Activated naive CD4-positive, alpha-beta T cell treated with anti-CD3 and anti-CD28 coated beads for 36 hours (primary cell): ENCODE measurements at regions of chr17 and their contacts with region 1.

Region 1: DNA sequence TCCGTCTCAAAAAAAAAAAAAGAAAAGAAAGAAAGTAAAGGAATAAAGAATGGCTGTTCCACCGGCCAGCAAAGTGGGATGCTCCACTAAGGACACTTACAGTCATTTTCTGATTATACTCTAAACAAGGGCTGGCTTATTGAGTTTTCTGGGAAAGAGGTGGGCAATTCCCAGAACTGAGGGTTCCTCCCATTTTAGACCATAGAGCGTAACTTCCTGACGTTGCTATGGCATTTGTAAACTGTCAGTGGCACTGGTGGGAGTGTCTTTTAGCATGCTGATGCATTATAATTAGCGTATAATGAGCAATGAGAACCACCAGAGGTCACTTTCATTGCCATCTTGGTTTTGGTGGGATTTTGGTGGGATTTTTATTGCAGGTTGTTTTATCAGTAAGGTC is 58.0 kb downstream of the PIGL start:
- DNase-seq: no peak
- H3K4me3 Mint-ChIP-seq: no peak overlapping the region
- H3K27ac Mint-ChIP-seq: no peak overlapping the region
- H3K4me1 Mint-ChIP-seq: peaks cover 7% of the 10 kb centered on the region
- H3K27me3 Mint-ChIP-seq: no peaks in the 10 kb centered on the region

Region 2: DNA sequence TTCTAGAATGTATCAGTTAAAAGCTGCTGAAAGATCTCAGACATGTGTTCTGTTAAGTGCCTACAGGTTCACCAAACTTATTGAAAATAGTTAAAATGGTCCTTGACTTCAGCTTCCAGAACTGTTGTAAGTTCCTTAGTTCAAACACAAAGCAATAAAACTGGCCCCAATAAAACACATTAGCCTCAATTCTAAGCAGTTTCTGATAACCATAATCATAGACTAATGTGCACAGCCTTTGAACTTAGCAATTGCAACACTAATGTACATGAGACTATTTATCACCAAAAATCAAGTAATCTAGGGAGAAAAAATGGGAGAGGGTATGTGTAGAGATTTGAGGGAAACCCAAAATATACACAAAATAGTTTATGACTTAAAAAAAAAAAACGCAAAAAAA is 42.6 kb before region 1 on chr17:
- CTCF ChIA-PET with region 1: no interaction called
- intact Hi-C with region 1: loop called (anchors 1 kb)
- DNase-seq: no peak
- H3K4me3 Mint-ChIP-seq: no peak overlapping the region
- H3K27ac Mint-ChIP-seq: no peak overlapping the region
- H3K4me1 Mint-ChIP-seq: peaks cover 24% of the 10 kb centered on the region
- H3K27me3 Mint-ChIP-seq: no peaks in the 10 kb centered on the region

Region 3: DNA sequence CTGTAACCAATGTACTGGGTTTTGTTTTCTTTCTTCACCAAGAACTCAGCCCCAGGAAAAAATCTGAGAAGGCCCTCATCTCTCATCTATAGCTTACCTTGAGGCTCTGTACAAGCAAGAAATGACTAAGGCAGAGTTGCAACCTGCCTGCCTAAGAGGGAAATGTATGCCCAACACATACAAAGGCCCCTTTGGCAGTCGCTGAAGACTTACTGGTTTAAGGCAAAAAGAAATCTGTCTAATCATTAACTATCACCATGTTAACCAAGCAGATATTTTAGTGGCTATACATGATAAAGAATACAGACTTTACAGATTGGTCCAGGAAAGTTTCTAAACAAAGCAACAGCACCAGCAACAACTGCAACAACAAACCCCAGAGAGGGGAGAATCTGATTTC is 364.4 kb after region 1 on chr17:
- CTCF ChIA-PET with region 1: no interaction called
- intact Hi-C with region 1: no loop called
- DNase-seq: no peak
- H3K4me3 Mint-ChIP-seq: no peak overlapping the region
- H3K27ac Mint-ChIP-seq: no peak overlapping the region
- H3K4me1 Mint-ChIP-seq: no peaks in the 10 kb centered on the region
- H3K27me3 Mint-ChIP-seq: no peaks in the 10 kb centered on the region